GM10248 (cell line): ENCODE measurements at regions of chr4 and their contacts with region 1.

Region 1: DNA sequence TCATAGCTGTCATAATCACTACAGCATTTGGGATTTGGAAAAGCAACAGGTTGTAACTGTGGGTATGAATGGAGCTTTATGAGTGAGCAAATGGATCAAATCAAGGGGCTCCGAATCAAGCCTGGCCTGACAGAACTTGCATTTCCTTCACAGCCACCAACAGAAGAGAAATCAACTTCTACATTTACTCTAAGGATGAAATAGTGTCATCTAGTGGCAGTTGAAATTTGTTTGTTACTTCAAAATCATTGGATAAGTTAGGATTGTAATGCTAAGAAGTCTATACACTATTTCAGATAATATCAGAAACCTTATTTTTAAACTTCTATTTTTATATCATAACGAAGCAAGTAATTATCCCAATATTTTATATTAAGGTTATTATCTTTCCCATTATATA is 10.7 kb upstream of the WDR17 start:
- DNase-seq: peak; percentile 18
- CTCF ChIP-seq: peak; percentile 46

Region 2: DNA sequence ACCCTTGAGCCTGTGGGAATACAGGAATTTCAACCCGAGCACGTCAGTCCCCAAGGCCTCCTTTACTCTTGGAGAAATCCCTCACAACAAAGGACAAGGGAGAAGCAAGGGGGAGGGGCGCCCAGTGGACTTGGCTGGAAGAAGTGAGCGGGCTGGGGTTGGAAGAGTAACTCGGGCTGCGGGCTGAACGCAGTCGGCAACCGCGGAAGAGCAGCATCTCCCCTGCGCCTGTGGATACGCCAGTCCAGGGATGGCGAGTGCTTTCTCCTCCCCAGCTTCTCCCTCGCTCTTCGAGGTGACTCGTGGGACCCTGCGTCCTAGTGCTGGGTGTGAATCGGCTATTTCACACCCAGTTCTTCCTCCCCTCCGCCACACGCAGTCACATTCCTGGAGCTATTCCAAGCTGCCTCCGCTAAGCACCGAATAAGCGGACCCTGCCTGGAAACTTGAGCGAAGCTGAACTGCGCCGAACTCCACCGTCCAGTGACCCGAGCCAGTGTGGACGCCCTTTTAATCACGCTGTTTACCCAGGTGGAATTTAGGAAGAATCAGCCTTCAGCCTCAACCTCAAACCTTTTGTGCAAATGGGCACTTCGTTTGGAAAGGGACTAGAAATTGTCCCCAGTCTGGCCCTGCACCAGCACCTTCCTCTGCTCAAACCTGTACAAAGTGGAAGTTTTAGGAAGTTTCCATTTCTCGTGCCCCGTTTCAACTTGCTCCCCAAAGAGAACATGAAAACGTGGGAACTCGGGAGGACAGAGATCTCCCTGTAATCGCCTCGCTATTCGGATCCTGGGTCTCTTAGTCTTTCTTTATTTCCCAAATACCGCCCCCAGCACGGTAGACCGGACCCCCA is 53.6 kb before region 1 on chr4:
- CTCF ChIA-PET with region 1: interaction called, 4 read pairs
- POLR2A ChIA-PET with region 1: interaction called, 13 read pairs
- DNase-seq: peak; percentile 10
- CTCF ChIP-seq: no peak

Region 3: GRCh38 chr4:176044589-176044951 is 10.4 kb before region 1 on chr4:
- CTCF ChIA-PET with region 1: interaction called, 13 read pairs
- POLR2A ChIA-PET with region 1: no interaction called
- DNase-seq: no peak
- CTCF ChIP-seq: no peak

Region 4: GRCh38 chr4:176077561-176077960 is 22.6 kb after region 1 on chr4:
- CTCF ChIA-PET with region 1: no interaction called
- POLR2A ChIA-PET with region 1: no interaction called
- DNase-seq: no peak
- CTCF ChIP-seq: no peak

Region 5: DNA sequence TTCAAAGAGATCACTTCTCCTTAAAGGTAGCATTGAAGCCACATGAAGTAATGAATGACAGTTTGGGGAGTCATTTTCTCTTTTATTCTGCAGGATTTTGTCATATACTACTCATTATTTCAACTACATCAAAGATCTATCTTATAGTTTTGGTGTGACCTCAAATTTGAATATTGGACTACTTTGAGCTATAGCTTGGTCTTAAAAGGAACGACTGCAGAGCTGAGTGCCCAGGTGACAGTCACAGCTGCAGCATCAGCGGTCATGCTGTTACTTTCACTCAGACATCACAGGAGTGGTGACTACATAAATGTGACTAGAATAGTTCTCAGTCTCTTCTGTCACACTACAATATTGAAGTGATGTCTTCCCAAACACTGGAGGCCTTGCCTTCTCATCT is 254.1 kb after region 1 on chr4:
- CTCF ChIA-PET with region 1: no interaction called
- POLR2A ChIA-PET with region 1: no interaction called
- DNase-seq: peak; percentile 48
- CTCF ChIP-seq: no peak